Caco-2 (cell line): ENCODE measurements at regions of chr4 and their contacts with region 1.

Region 1: GRCh38 chr4:78653655-78654054 is 102.1 kb downstream of the ANXA3 start:
- DNase-seq: no peak
- H3K4me3 ChIP-seq: no peak overlapping the region
- H3K4me3 Mint-ChIP-seq: no peak overlapping the region
- H3K27ac Mint-ChIP-seq: no peak overlapping the region
- H3K4me1 ChIP-seq: no peaks in the 10 kb centered on the region
- H3K4me1 Mint-ChIP-seq: peaks cover 13% of the 10 kb centered on the region
- H3K27me3 ChIP-seq: no peaks in the 10 kb centered on the region
- H3K27me3 Mint-ChIP-seq: no peaks in the 10 kb centered on the region
- CTCF ChIP-seq: no peak

Region 2: GRCh38 chr4:77347341-77347966 is 1306.2 kb before region 1 on chr4:
- CTCF ChIA-PET with region 1: interaction called, 11 read pairs
- POLR2A ChIA-PET with region 1: no interaction called
- intact Hi-C with region 1: no loop called
- DNase-seq: peak in 1 of 2 experiments; percentile 11
- H3K4me3 ChIP-seq: no peak overlapping the region
- H3K4me3 Mint-ChIP-seq: no peak overlapping the region
- H3K27ac Mint-ChIP-seq: no peak overlapping the region
- H3K4me1 ChIP-seq: peaks cover 6% of the 10 kb centered on the region
- H3K4me1 Mint-ChIP-seq: no peaks in the 10 kb centered on the region
- H3K27me3 ChIP-seq: no peaks in the 10 kb centered on the region
- H3K27me3 Mint-ChIP-seq: no peaks in the 10 kb centered on the region
- CTCF ChIP-seq: no peak